CD8-positive, alpha-beta memory T cell (primary cell): ENCODE measurements at regions of chr12 and their contacts with region 1.

Region 1: GRCh38 chr12:7933255-7933729 is 2.7 kb downstream of the SLC2A3 start:
- DNase-seq: peak; percentile 59 to 86 (median 82)
- H3K4me3 ChIP-seq: peak overlapping the region; percentile 100
- H3K4me3 Mint-ChIP-seq: no peak overlapping the region
- H3K27ac ChIP-seq: peak overlapping the region; percentile 94
- H3K27ac Mint-ChIP-seq: no peak overlapping the region
- H3K4me1 ChIP-seq: peaks cover 58% of the 10 kb centered on the region
- H3K4me1 Mint-ChIP-seq: peaks cover 27 to 36% (median 33%) of the 10 kb centered on the region in 3 donors
- H3K27me3 ChIP-seq: no peaks in the 10 kb centered on the region
- H3K27me3 Mint-ChIP-seq: no peaks in the 10 kb centered on the region

Region 2: GRCh38 chr12:7859552-7859951 is 73.7 kb before region 1 on chr12:
- CTCF ChIA-PET with region 1: interaction called, 25 read pairs
- POLR2A ChIA-PET with region 1: interaction called, 12 read pairs
- DNase-seq: no peak
- H3K4me3 ChIP-seq: no peak overlapping the region
- H3K4me3 Mint-ChIP-seq: peak overlapping the region in 1 of 7 donors; percentile 34
- H3K27ac ChIP-seq: no peak overlapping the region
- H3K27ac Mint-ChIP-seq: no peak overlapping the region
- H3K4me1 ChIP-seq: no peaks in the 10 kb centered on the region
- H3K4me1 Mint-ChIP-seq: peaks cover 9 to 10% (median 9%) of the 10 kb centered on the region in 3 donors
- H3K27me3 ChIP-seq: no peaks in the 10 kb centered on the region
- H3K27me3 Mint-ChIP-seq: peaks cover 11 to 12% of the 10 kb centered on the region in 2 donors

Region 3: GRCh38 chr12:7959701-7960121 is 26.4 kb after region 1 on chr12:
- CTCF ChIA-PET with region 1: interaction called, 144 read pairs
- POLR2A ChIA-PET with region 1: interaction called, 182 read pairs
- DNase-seq: peak; percentile 29 to 62 (median 56)
- H3K4me3 ChIP-seq: peak overlapping the region; percentile 54
- H3K4me3 Mint-ChIP-seq: peak overlapping the region; percentile 85 to 94 (median 93)
- H3K27ac ChIP-seq: peak overlapping the region; percentile 43
- H3K27ac Mint-ChIP-seq: peak overlapping the region; percentile 74 to 99 (median 96)
- H3K4me1 ChIP-seq: peaks cover 26% of the 10 kb centered on the region
- H3K4me1 Mint-ChIP-seq: peaks cover 31 to 45% (median 38%) of the 10 kb centered on the region in 3 donors
- H3K27me3 ChIP-seq: no peaks in the 10 kb centered on the region
- H3K27me3 Mint-ChIP-seq: no peaks in the 10 kb centered on the region

Region 4: GRCh38 chr12:7989827-7990551 is 56.7 kb after region 1 on chr12:
- CTCF ChIA-PET with region 1: interaction called, 75 read pairs
- POLR2A ChIA-PET with region 1: interaction called, 20 read pairs
- DNase-seq: peak; percentile 34 to 85 (median 45)
- H3K4me3 ChIP-seq: peak overlapping the region; percentile 3
- H3K4me3 Mint-ChIP-seq: peak overlapping the region; percentile 1 to 90 (median 79)
- H3K27ac ChIP-seq: peak overlapping the region; percentile 43
- H3K27ac Mint-ChIP-seq: peak overlapping the region; percentile 75 to 96 (median 88)
- H3K4me1 ChIP-seq: peaks cover 31% of the 10 kb centered on the region
- H3K4me1 Mint-ChIP-seq: peaks cover 21 to 35% (median 28%) of the 10 kb centered on the region in 3 donors
- H3K27me3 ChIP-seq: no peaks in the 10 kb centered on the region
- H3K27me3 Mint-ChIP-seq: no peaks in the 10 kb centered on the region

Region 5: GRCh38 chr12:8026291-8026900 is 93.1 kb after region 1 on chr12:
- CTCF ChIA-PET with region 1: interaction called, 5 read pairs
- POLR2A ChIA-PET with region 1: interaction called, 16 read pairs
- DNase-seq: peak; percentile 92 to 98 (median 97)
- H3K4me3 ChIP-seq: peak overlapping the region; percentile 91
- H3K4me3 Mint-ChIP-seq: peak overlapping the region; percentile 89 to 98 (median 96)
- H3K27ac ChIP-seq: peak overlapping the region; percentile 99
- H3K27ac Mint-ChIP-seq: peak overlapping the region; percentile 97 to 100 (median 100)
- H3K4me1 ChIP-seq: peaks cover 16% of the 10 kb centered on the region
- H3K4me1 Mint-ChIP-seq: peaks cover 19 to 28% (median 20%) of the 10 kb centered on the region in 3 donors
- H3K27me3 ChIP-seq: no peaks in the 10 kb centered on the region
- H3K27me3 Mint-ChIP-seq: peaks cover 0 to 3% of the 10 kb centered on the region in 2 donors